ENCODE measurements at regions of chr16 and their contacts with region 1.

Region 1: DNA sequence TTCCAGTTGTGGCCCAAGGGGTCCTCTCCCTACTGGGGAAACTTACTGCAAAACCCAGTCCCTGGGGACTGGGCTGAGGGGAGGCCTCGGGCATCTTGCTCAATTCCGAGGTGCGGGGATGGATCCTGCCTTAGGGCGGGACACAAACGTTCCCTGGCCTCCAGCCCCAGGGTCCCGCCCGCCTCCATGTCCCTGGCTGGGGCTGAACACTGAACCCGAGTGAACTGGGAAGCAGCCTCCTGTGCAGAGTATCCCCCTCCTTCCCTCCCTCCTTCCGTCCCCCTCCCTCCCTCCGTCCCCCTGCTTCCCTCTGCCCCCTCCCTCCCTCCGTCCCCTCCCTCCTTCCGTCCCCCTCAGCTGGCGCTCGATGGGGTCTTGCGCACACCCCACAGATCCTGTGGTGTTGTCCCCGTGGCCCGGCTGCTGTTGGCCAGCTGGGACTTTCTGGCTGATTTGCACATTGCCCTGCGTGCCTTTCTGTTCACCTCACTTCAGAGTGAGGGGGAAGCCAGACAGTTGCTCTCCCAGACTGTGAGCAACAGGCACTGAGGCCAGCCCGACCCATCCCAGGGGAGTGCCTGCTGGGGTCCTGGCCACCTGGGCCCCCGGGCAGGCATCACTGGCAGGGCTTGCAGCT is 5.5 kb downstream of the TRAF7 start:
- DNase-seq: no peak
- H3K4me3 ChIP-seq: no peak overlapping the region
- H3K27ac ChIP-seq: peak overlapping the region; percentile 35
- H3K4me1 ChIP-seq: peaks cover 76% of the 10 kb centered on the region
- H3K27me3 ChIP-seq: no peaks in the 10 kb centered on the region
- CTCF ChIP-seq: no peak

Region 2: GRCh38 chr16:2071454-2072202 is 89.4 kb before region 1 on chr16:
- CTCF ChIA-PET with region 1: no interaction called
- dilution Hi-C with region 1: loop called (anchors 5 kb)
- in situ Hi-C with region 1: no loop called
- intact Hi-C with region 1: no loop called
- DNase-seq: no peak
- H3K4me3 ChIP-seq: no peak overlapping the region
- H3K27ac ChIP-seq: no peak overlapping the region
- H3K4me1 ChIP-seq: no peaks in the 10 kb centered on the region
- H3K27me3 ChIP-seq: no peaks in the 10 kb centered on the region
- CTCF ChIP-seq: no peak

Region 3: GRCh38 chr16:2196162-2196980 is 35.3 kb after region 1 on chr16 and contains the start of gene CASKIN1:
- CTCF ChIA-PET with region 1: no interaction called
- dilution Hi-C with region 1: no loop called
- in situ Hi-C with region 1: no loop called
- intact Hi-C with region 1: no loop called
- DNase-seq: no peak
- H3K4me3 ChIP-seq: peak within 1 kb of the TSS in 2 of 3 experiments; percentile 39 to 44
- H3K27ac ChIP-seq: no peak within 1 kb of the TSS
- H3K4me1 ChIP-seq: peaks cover 15% of the 10 kb centered on the region
- H3K27me3 ChIP-seq: no peaks in the 10 kb centered on the region
- CTCF ChIP-seq: no peak
- total RNA-seq, gene CASKIN1: 0.83 to 1.4 TPM

Region 4: DNA sequence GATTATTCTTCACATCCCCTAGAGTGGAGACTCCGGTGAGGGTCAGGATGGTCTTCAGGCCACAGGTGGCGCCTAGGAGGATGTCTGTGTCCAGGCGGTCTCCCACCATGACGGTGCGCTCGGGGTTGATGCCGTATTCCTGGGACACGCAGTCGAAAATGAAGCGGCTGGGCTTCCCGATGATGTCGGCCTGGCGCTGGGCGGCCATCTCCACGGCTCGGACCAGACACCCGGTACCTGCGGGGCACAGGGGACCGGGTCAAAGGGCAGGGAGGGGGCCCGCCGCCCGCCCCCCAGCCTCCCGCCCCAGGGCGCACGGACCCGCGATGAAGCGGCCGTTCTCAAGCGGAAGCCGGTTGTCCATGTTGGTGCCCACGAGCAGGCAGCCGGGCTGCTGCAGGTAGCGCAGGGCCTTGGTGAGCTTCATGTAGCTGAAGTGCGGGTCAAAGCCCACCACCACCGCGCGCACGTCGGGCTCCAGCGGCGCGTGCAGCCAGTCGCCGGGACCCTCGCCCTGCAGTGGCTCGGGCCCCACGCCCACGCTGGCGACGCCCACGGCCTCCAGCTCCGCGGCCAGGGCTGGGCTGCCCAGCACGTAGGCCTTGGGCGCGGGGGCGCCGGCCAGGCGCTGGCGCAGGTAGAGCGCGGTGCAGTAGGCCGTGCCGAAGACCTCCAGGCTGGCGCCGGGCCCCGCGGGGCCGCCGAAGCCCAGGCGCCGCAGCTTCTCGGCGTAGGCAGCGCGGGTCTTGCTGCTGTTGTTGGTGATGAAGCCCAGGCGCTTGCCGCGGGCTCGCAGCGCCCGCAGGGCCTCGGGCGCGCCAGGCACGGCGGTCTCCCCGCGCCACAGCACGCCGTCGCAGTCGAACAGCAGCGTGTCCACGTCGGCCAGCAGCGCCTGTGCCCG is 53.0 kb after region 1 on chr16:
- CTCF ChIA-PET with region 1: no interaction called
- dilution Hi-C with region 1: loop called (anchors 5 kb)
- in situ Hi-C with region 1: no loop called
- intact Hi-C with region 1: loop called (anchors 5 kb)
- DNase-seq: no peak
- H3K4me3 ChIP-seq: peak overlapping the region; percentile 52 to 88 (median 60)
- H3K27ac ChIP-seq: peak overlapping the region; percentile 47
- H3K4me1 ChIP-seq: peaks cover 26% of the 10 kb centered on the region
- H3K27me3 ChIP-seq: no peaks in the 10 kb centered on the region
- CTCF ChIP-seq: no peak

Region 5: DNA sequence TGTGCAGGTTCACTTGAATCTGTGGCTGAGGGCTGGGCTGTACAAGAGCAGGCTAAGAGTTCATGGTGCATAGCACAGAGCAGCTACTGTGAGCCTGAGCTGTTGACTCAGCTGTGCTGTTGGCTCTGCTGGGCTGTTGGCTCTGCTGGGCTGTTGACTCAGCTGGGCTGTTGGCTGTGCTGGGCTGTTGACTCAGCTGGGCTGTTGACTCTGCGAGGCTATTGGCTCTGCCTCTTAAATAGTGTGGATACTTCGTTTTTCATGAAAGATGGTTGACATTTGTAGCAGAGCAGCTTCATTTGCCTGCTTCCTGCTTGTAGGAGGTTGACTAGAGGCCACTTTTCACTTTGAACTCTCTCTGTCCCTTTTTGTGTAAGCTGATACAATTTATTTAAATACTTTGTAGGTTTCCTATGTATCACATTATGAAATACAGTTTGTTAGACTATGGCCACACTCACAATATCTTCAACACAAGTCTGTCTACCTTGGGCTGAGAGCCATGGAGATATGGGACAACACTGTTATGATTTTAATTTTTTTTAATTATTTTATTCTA is 227.9 kb after region 1 on chr16:
- CTCF ChIA-PET with region 1: no interaction called
- dilution Hi-C with region 1: no loop called
- in situ Hi-C with region 1: no loop called
- intact Hi-C with region 1: no loop called
- DNase-seq: peak; percentile 76
- H3K4me3 ChIP-seq: no peak overlapping the region
- H3K27ac ChIP-seq: no peak overlapping the region
- H3K4me1 ChIP-seq: peaks cover 9% of the 10 kb centered on the region
- H3K27me3 ChIP-seq: no peaks in the 10 kb centered on the region
- CTCF ChIP-seq: no peak

Region 6: DNA sequence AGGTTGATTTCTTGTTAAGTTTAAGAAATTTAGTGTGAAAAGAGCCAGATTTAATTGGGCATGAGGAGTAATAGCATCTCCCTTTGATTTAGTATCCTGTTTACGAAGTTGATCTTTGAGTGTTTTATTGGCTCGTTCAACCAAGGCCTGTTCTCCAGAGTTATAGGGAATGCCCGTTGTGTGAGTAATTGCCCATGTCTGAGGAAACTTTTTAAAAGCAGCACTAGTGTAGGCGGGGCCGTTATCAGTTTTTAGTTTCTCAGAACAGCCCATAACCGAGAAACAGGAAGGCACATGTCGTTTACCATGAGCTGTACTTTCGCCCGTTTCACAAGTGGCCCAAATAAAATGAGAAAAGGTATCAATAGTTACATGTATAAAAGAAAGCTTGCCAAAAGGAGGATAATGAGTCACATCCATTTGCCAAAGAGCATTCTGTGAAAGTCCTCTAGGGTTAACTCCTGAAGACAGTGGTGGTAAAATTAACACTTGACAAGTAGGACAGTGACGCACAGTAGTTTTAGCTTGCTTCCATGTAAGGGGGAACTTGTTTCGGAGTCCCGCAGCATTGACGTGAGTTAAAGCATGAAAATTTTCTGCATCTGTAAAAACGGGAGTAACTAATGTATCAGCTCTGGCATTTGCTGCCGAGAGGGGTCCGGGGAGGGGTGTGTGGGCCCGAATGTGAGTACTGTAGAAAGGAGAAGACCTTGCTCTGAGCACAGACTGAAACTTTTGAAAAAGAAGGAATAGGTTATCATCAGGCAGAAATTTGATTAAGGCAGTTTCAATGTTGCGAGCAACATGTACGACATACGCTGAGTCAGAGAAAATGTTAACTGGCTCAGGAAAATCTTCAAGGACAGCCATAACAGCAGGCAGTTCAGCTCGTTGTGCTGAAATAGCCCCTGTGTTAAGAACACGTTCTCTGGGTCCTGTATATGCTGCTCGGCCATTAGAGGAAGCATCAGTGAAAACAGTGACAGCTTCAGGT is 502.8 kb after region 1 on chr16:
- CTCF ChIA-PET with region 1: no interaction called
- dilution Hi-C with region 1: loop called (anchors 10 kb)
- in situ Hi-C with region 1: no loop called
- intact Hi-C with region 1: no loop called
- DNase-seq: peak; percentile 92
- H3K4me3 ChIP-seq: no peak overlapping the region
- H3K27ac ChIP-seq: no peak overlapping the region
- H3K4me1 ChIP-seq: no peaks in the 10 kb centered on the region
- H3K27me3 ChIP-seq: no peaks in the 10 kb centered on the region
- CTCF ChIP-seq: no peak

Measured in mammary epithelial cell (primary cell).